ENCODE measurements at regions of chr18 and their contacts with region 1.

Region 1: DNA sequence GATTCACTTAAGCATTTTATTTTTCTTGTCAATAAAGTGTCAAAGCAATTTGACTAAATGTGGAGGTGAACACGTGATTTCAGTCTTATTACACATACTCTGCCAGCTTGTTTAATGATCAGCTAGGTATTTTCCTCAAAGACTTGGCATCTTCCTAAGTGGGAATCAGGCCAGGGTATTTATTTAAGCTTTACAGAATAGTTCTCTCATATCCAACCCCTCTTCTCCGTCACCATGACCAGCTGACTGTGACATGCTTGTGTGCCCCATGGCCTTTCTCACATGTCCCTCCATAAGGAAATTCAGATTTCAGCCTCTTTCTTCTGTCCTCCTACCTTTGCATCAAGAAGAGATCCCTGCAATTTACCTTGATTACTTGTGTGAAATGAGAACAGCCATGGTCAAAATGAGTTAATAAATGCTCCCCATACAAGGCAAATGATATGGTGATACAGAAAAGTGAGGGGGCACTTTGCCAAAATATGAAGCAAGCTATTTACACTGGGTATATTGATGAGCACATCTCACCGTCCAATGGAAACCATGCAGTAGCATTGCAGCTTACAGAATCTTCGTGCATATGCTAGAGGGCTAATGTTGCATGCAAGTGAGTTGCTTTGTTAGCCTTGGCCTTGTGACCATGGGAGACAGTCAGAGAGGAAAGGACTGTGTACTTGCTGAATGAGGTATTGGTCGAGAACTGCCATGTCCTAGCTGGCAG is 202.2 kb downstream of the RNF152 start:
- DNase-seq: no peak
- H3K4me3 ChIP-seq: no peak overlapping the region
- H3K27ac ChIP-seq: no peak overlapping the region
- H3K4me1 ChIP-seq: no peaks in the 10 kb centered on the region
- H3K27me3 ChIP-seq: no peaks in the 10 kb centered on the region
- CTCF ChIP-seq: no peak

Region 2: DNA sequence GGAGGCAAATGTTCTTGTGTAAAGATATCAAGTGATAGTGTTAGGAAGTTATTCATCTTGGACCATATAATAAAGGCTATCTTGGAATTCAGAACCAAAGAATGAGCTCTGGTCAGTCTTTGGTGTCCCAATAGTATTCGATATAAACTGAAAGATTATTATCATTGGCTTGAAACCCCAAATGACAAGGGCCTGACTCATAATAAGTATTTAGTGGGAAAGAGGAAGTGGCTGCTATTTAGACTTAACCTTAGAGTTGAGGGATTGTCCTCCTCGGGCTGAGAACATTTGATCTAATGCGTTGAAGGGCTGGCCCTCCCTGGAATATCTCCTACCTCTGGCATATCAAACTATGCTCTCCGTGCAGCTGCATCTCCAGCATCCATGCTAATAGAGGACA is 289.9 kb before region 1 on chr18:
- CTCF ChIA-PET with region 1: no interaction called
- dilution Hi-C with region 1: no loop called
- in situ Hi-C with region 1: no loop called
- intact Hi-C with region 1: no loop called
- DNase-seq: peak; percentile 21
- H3K4me3 ChIP-seq: no peak overlapping the region
- H3K27ac ChIP-seq: no peak overlapping the region
- H3K4me1 ChIP-seq: peaks cover 12% of the 10 kb centered on the region
- H3K27me3 ChIP-seq: no peaks in the 10 kb centered on the region
- CTCF ChIP-seq: no peak

Region 3: DNA sequence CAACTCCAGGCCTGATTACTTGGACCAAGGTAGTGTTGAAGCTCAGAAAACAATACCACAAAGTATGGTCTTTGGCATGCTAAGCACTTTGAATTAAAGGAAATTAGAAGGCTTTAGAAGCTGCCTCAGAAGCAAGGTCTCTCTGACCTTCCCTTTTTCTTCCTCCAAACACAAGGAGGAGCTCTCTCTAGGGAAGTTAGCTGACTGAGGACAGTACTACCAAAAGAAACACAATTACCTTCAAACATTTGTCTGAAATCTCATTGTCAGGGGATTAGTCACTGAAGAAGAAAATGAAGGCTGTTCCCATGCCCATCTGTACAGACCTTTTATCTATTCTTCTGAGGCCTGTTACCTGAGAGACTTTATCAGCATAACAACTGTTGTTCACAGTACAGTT is 78.1 kb before region 1 on chr18:
- CTCF ChIA-PET with region 1: no interaction called
- dilution Hi-C with region 1: no loop called
- in situ Hi-C with region 1: no loop called
- intact Hi-C with region 1: no loop called
- DNase-seq: peak; percentile 29
- H3K4me3 ChIP-seq: no peak overlapping the region
- H3K27ac ChIP-seq: no peak overlapping the region
- H3K4me1 ChIP-seq: peaks cover 16% of the 10 kb centered on the region
- H3K27me3 ChIP-seq: no peaks in the 10 kb centered on the region
- CTCF ChIP-seq: peak; percentile 10 to 38

Region 4: GRCh38 chr18:61755555-61755954 is 65.0 kb after region 1 on chr18:
- CTCF ChIA-PET with region 1: no interaction called
- dilution Hi-C with region 1: loop called (anchors 5 kb)
- in situ Hi-C with region 1: no loop called
- intact Hi-C with region 1: no loop called
- DNase-seq: no peak
- H3K4me3 ChIP-seq: no peak overlapping the region
- H3K27ac ChIP-seq: no peak overlapping the region
- H3K4me1 ChIP-seq: no peaks in the 10 kb centered on the region
- H3K27me3 ChIP-seq: no peaks in the 10 kb centered on the region
- CTCF ChIP-seq: no peak